ENCODE measurements at regions of chr18 and their contacts with region 1.

Region 1: DNA sequence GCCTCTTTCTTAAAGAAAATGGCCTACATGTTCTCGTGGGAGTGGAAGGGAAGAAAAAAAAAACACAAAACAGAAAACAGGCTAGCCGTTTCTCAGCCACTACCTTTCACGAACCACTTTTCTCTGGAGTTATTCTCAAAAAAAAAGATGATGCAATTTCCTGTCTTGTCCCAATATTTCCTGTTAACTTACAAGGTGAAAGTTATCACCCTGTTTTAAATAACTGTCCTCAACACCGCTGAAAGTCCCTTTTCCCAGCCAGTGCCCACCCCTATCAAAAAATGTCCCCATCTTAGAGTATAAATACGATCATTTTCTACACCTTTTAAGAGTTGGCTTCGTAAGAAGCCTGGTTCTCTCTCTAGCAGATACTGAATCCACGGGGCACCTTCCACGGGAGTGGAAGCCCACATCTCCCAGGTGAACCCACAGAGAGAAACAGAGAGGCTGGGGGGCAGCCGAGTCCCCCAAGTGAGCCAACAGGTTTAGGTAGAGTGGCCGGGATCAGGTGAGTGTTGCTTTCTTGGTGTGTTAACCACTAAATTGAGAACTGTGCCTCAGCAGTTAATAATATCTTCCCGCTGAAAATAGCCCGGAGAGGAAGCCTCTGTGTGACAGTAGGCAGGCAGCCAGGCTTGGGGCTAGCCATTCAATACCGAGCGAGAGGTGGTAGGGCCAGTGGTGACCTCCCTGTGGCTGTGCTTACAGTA is 15.9 kb downstream of the SMAD7 start:
- DNase-seq: peak; percentile 84 to 91 (median 86)
- ATAC-seq: peak; percentile 75 to 85 (median 80)
- H3K4me3 ChIP-seq: peak overlapping the region in 10 of 12 donors; percentile 11 to 48 (median 34)
- H3K27ac ChIP-seq: peak overlapping the region; percentile 17 to 96 (median 86)
- H3K4me1 ChIP-seq: peaks cover 34 to 98% (median 93%) of the 10 kb centered on the region in 12 donors
- H3K27me3 ChIP-seq: no peaks in the 10 kb centered on the region
- CTCF ChIP-seq: no peak
- POLR2A ChIP-seq: no peak

Region 2: GRCh38 chr18:48790226-48790874 is 144.5 kb before region 1 on chr18:
- intact Hi-C with region 1: loop called in 1 of 10 experiments (anchors 5 kb)
- DNase-seq: peak; percentile 89 to 94 (median 91)
- ATAC-seq: peak; percentile 81 to 85 (median 82)
- H3K4me3 ChIP-seq: no peak overlapping the region
- H3K27ac ChIP-seq: peak overlapping the region; percentile 75 to 96 (median 86)
- H3K4me1 ChIP-seq: peaks cover 5 to 78% (median 53%) of the 10 kb centered on the region in 12 donors
- H3K27me3 ChIP-seq: no peaks in the 10 kb centered on the region
- CTCF ChIP-seq: no peak
- POLR2A ChIP-seq: no peak

Region 3: DNA sequence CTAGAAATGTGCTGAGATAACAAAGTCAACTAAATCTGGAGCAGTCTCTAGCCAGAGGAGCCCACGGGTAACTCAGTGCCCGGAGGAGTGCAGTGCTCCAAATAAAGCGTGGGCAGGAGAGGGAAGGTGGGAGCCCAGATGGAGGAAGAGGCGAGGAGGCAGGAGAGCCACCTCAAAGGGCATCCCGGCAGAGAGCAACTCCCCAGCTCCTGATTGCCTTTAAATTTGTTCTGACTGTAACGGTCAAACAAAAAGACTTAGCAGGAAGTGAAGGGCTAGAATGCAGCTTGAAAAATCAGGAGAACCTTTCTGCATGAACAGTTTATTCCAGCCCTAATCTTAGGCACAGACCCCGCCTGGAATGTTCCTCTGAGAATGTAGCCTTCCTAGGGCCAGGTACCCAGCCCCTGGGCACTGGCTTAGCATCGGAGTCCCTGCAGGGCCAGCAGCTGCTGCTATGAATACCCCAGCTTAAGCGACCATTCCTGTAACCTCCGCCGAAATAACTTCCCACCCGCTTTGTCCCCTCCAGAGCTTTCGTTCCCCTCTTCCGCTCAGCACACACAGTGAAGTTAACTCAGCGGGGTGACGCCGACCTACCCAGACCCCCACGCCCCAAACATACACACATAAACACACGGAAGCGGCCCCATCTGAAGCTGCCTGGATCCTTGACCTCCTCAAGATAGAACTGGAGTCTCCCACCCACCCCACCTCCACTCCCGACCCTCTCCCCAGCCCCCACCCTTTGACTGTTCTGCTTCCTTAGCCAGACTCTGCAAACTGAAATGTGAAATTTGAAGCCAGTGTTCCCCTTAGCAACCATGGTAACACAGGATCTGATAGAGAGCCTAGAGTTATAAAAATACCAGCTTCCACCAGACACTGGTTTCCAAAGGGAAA is 107.3 kb before region 1 on chr18:
- intact Hi-C with region 1: no loop called
- DNase-seq: peak in 3 of 5 donors; percentile 13 to 18 (median 15)
- ATAC-seq: peak; percentile 34 to 68 (median 38)
- H3K4me3 ChIP-seq: peak overlapping the region in 6 of 12 donors; percentile 5 to 37 (median 24)
- H3K27ac ChIP-seq: peak overlapping the region in 10 of 12 donors; percentile 17 to 69 (median 58)
- H3K4me1 ChIP-seq: peaks cover 7 to 73% (median 58%) of the 10 kb centered on the region in 12 donors
- H3K27me3 ChIP-seq: no peaks in the 10 kb centered on the region
- CTCF ChIP-seq: no peak
- POLR2A ChIP-seq: no peak

Region 4: GRCh38 chr18:48992699-48993555 is 58.0 kb after region 1 on chr18:
- intact Hi-C with region 1: no loop called
- DNase-seq: peak in 2 of 5 donors; percentile 27 to 61
- ATAC-seq: peak in 2 of 4 donors; percentile 37 to 48
- H3K4me3 ChIP-seq: no peak overlapping the region
- H3K27ac ChIP-seq: peak overlapping the region in 5 of 12 donors; percentile 35 to 82 (median 73)
- H3K4me1 ChIP-seq: peaks cover 3 to 84% (median 51%) of the 10 kb centered on the region in 12 donors
- H3K27me3 ChIP-seq: no peaks in the 10 kb centered on the region
- CTCF ChIP-seq: no peak
- POLR2A ChIP-seq: no peak

Measured in heart left ventricle (tissue), 16 donors.